ENCODE measurements at regions of chr10 and their contacts with region 1.

Region 1: GRCh38 chr10:29998142-29998808 is 61.1 kb downstream of the JCAD start:
- DNase-seq: peak; percentile 16
- H3K4me3 ChIP-seq: no peak overlapping the region
- H3K27me3 ChIP-seq: peaks cover 10% of the 10 kb centered on the region
- CTCF ChIP-seq: peak; percentile 100

Region 2: GRCh38 chr10:29980084-29980483 is 18.2 kb before region 1 on chr10:
- CTCF ChIA-PET with region 1: interaction called, 86 read pairs
- POLR2A ChIA-PET with region 1: no interaction called
- DNase-seq: no peak
- H3K4me3 ChIP-seq: no peak overlapping the region
- H3K27me3 ChIP-seq: peaks cover 12% of the 10 kb centered on the region
- CTCF ChIP-seq: no peak

Region 3: GRCh38 chr10:30013757-30014156 is 15.5 kb after region 1 on chr10:
- CTCF ChIA-PET with region 1: interaction called, 64 read pairs
- POLR2A ChIA-PET with region 1: no interaction called
- DNase-seq: no peak
- H3K4me3 ChIP-seq: no peak overlapping the region
- H3K27me3 ChIP-seq: no peaks in the 10 kb centered on the region
- CTCF ChIP-seq: no peak

Region 4: DNA sequence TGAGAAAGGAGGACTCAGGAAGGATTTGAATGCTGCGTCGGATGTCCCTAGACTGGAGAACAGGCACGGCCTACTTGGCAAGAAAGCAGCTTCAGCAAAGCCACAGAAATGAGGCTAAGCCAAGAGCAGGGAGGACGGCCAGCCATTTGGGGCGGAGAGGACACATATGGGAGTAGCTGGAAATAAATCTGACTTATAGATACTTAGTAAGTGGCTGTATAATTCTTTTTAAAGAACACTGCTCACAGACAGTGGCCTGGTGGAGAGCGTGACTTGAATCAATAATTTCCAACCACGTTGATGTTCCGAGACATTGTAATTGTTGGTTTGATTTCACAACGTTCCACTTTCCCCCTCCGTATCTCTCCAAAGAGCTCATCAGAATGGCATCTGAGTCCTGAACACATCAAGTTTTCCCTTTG is 128.9 kb after region 1 on chr10:
- CTCF ChIA-PET with region 1: no interaction called
- POLR2A ChIA-PET with region 1: no interaction called
- DNase-seq: no peak
- H3K4me3 ChIP-seq: no peak overlapping the region
- H3K27me3 ChIP-seq: no peaks in the 10 kb centered on the region
- CTCF ChIP-seq: no peak

Region 5: DNA sequence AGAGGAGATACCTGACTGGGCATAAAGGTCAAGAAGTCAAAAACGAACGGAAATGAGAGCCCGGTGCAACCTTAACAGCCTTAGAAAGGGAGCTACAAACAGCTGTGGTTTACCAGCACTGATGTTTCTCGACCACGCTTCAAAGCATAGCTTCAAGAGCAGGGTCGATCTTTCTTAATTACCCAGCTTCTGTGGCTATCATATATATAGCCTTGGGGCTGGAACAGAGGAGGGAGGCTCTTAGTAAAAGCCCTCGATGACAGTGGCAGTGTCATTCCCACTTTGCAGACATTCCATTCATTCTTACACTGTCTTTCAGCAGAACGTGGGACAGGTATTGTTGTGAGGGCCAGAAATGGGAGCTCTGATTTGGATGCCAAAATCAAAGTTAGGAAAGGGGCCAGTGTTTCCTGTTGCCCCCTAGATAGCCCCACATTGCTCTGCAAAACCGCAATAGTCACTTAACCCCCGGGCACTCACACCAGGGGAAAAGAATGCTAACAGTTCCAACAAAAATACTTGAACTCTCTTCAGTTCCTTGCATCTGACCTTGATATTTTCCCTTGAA is 209.3 kb after region 1 on chr10:
- CTCF ChIA-PET with region 1: interaction called, 10 read pairs
- POLR2A ChIA-PET with region 1: no interaction called
- DNase-seq: no peak
- H3K4me3 ChIP-seq: no peak overlapping the region
- H3K27me3 ChIP-seq: peaks cover 2% of the 10 kb centered on the region; the same call in 1 of the 2 replicates
- CTCF ChIP-seq: no peak

Region 6: DNA sequence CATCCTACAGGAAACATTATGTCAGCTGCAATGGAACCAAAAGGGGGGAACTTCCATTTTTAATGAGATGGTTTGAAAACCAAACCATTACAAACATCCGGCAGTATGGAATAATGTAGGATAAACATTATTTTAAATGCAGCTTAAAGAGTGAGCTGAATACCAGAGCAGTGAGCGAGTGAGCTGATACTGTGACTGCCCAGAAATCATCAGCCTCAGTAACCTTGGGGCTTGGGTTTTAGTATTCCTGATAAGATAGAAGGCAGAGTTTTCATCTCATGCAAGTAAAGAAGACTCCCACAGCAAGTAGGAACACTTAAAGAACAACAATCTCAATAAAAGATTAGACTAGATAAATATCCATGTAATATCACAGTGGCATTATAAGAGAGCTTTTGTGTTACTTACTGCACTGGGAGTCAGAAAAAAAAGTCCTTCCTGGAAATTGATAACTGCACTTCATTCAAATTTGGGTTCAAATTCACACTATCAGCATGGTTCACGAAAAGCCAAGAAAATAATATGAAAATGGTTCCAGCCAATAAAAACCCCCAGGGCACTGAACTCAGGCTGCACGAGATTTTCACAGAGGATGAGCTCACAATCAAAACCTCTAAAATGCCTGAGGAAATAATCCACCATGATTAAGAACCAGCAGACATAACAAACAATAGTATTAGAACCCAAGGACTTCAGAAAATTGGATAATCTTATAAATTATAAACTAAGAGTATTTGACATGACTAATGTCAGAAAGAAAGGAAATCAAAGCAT is 235.1 kb after region 1 on chr10:
- CTCF ChIA-PET with region 1: interaction called, 165 read pairs
- POLR2A ChIA-PET with region 1: no interaction called
- DNase-seq: no peak
- H3K4me3 ChIP-seq: no peak overlapping the region
- H3K27me3 ChIP-seq: no peaks in the 10 kb centered on the region; the same call in 1 of the 2 replicates
- CTCF ChIP-seq: no peak

Region 7: GRCh38 chr10:30247704-30248103 is 249.4 kb after region 1 on chr10:
- CTCF ChIA-PET with region 1: interaction called, 165 read pairs
- POLR2A ChIA-PET with region 1: no interaction called
- DNase-seq: no peak
- H3K4me3 ChIP-seq: no peak overlapping the region
- H3K27me3 ChIP-seq: no peaks in the 10 kb centered on the region
- CTCF ChIP-seq: no peak

Measured in BJ (cell line).